Activated CD4-positive, alpha-beta T cell treated with anti-CD3 and anti-CD28 coated beads for 36 hours (primary cell): ENCODE measurements at regions of chr11 and their contacts with region 1.

Region 1: DNA sequence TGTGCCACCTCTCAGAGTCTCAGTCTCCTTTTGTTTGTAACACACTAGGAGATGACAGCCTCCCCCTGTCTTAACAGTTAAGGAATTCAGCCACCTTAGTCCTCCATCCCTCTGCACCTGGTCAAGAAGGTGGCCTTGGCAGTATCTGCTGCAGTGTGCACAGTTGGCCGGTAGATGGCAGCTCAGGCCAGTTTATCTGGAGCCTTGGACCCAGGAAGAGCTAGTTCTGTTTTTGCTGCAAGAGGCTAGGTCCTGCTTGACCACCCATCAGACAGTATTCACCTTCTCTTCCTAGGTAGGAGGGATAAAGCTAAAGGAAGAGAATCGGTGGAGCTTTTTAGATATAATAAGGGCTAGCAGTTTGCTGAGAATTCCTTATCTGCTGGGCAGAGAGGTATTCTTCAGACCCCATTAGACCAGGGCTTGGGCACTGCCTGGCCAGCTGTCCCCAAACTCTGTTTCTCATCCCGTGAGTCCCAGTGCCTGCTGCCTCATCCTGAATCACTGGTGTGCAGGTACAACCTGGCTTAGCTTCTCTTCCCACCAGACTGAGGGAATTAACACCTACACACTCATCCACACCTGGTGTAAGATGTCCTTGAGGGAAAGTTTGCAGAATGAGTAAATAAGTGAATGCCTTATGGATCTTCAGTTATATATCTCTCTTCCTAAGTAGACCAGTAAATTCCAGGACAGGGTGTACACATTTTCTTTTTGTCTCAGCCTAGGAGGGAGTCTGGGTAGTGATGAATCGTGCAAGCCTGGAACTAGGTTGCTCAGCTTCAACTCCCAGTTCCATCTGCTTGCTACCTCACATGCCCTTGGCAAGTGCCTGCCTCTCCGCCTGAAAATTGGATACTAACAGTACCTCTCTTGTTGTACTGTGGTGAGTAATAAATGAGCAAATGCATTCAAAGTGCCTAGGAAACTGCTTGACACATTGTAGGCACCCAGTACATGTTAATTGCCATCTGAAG is 70.8 kb upstream of the NARS2 start:
- DNase-seq: peak; percentile 78
- ATAC-seq: no peak
- H3K4me3 Mint-ChIP-seq: no peak overlapping the region
- H3K27ac Mint-ChIP-seq: no peak overlapping the region
- H3K4me1 Mint-ChIP-seq: peaks cover 31% of the 10 kb centered on the region
- H3K27me3 Mint-ChIP-seq: peaks cover 7% of the 10 kb centered on the region

Region 2: GRCh38 chr11:78574386-78575381 is 70.8 kb before region 1 on chr11 and contains the start of gene NARS2:
- CTCF ChIA-PET with region 1: interaction called, 5 read pairs
- POLR2A ChIA-PET with region 1: no interaction called
- intact Hi-C with region 1: loop called in 1 of 2 experiments (anchors 2 kb)
- DNase-seq: peak; percentile 100
- ATAC-seq: peak; percentile 99
- H3K4me3 Mint-ChIP-seq: peak within 1 kb of the TSS; percentile 97
- H3K27ac Mint-ChIP-seq: peak within 1 kb of the TSS; percentile 89
- H3K4me1 Mint-ChIP-seq: peaks cover 28% of the 10 kb centered on the region
- H3K27me3 Mint-ChIP-seq: no peaks in the 10 kb centered on the region
- total RNA-seq, gene NARS2: 22.9 to 33.4 TPM

Region 3: GRCh38 chr11:78715639-78716311 is 70.3 kb after region 1 on chr11:
- CTCF ChIA-PET with region 1: interaction called, 88 read pairs
- POLR2A ChIA-PET with region 1: interaction called, 5 read pairs
- intact Hi-C with region 1: loop called (anchors 1 kb)
- DNase-seq: peak; percentile 83
- ATAC-seq: peak; percentile 89
- H3K4me3 Mint-ChIP-seq: no peak overlapping the region
- H3K27ac Mint-ChIP-seq: no peak overlapping the region
- H3K4me1 Mint-ChIP-seq: peaks cover 3% of the 10 kb centered on the region
- H3K27me3 Mint-ChIP-seq: peaks cover 8% of the 10 kb centered on the region

Region 4: GRCh38 chr11:78762105-78762504 is 116.6 kb after region 1 on chr11:
- CTCF ChIA-PET with region 1: no interaction called
- POLR2A ChIA-PET with region 1: no interaction called
- intact Hi-C with region 1: no loop called
- DNase-seq: no peak
- ATAC-seq: no peak
- H3K4me3 Mint-ChIP-seq: no peak overlapping the region
- H3K27ac Mint-ChIP-seq: no peak overlapping the region
- H3K4me1 Mint-ChIP-seq: no peaks in the 10 kb centered on the region
- H3K27me3 Mint-ChIP-seq: peaks cover 7% of the 10 kb centered on the region

Region 5: GRCh38 chr11:78825591-78826020 is 180.1 kb after region 1 on chr11:
- CTCF ChIA-PET with region 1: no interaction called
- POLR2A ChIA-PET with region 1: no interaction called
- intact Hi-C with region 1: no loop called
- DNase-seq: no peak
- ATAC-seq: no peak
- H3K4me3 Mint-ChIP-seq: no peak overlapping the region
- H3K27ac Mint-ChIP-seq: no peak overlapping the region
- H3K4me1 Mint-ChIP-seq: no peaks in the 10 kb centered on the region
- H3K27me3 Mint-ChIP-seq: no peaks in the 10 kb centered on the region

Region 6: DNA sequence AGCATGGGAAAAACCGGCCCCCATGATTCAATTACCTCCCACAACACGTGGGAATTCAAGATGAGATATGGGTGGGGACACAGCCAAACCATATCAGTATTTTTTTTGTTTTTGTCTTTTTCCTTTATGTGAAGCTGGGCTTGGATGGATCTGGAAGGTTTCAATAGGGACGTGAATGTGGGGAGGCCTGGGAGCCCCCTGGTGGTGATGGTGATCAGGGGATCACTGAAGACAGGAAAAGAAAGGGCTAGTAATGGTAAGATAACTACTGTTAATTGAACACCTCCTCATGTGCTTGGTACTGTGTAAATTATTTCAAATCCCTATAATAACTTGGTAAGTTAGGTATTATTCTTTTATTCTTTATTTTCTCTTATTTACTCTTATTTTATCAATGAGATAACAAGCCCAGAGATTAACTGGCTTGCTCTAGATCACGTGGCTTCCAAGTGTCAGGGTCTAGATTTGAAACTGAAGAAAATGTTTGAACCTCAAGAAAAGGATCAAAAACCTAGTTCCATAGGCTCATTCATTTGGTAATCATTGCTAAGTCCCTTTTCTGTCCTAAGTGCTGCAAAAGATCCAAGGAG is 431.1 kb after region 1 on chr11:
- CTCF ChIA-PET with region 1: interaction called, 10 read pairs
- POLR2A ChIA-PET with region 1: no interaction called
- intact Hi-C with region 1: loop called (anchors 1 to 10 kb)
- DNase-seq: peak; percentile 41
- ATAC-seq: no peak
- H3K4me3 Mint-ChIP-seq: no peak overlapping the region
- H3K27ac Mint-ChIP-seq: no peak overlapping the region
- H3K4me1 Mint-ChIP-seq: no peaks in the 10 kb centered on the region
- H3K27me3 Mint-ChIP-seq: peaks cover 2% of the 10 kb centered on the region

Region 7: GRCh38 chr11:79493555-79494171 is 848.1 kb after region 1 on chr11:
- CTCF ChIA-PET with region 1: interaction called, 4 read pairs
- POLR2A ChIA-PET with region 1: no interaction called
- intact Hi-C with region 1: loop called in 1 of 2 experiments (anchors 1 kb)
- DNase-seq: peak; percentile 70
- ATAC-seq: no peak
- H3K4me3 Mint-ChIP-seq: no peak overlapping the region
- H3K27ac Mint-ChIP-seq: no peak overlapping the region
- H3K4me1 Mint-ChIP-seq: no peaks in the 10 kb centered on the region
- H3K27me3 Mint-ChIP-seq: peaks cover 5% of the 10 kb centered on the region